A549 (cell line): ENCODE measurements at regions of chr11 and their contacts with region 1.

Region 1: GRCh38 chr11:65366340-65366773 is 11.8 kb downstream of the TIGD3 start:
- DNase-seq: peak; percentile 88 to 90
- ATAC-seq: peak; percentile 84 to 85
- H3K4me3 ChIP-seq: no peak overlapping the region
- H3K27ac ChIP-seq: peak overlapping the region; percentile 45 to 72; a peak in 5 of 6 replicates
- H3K4me1 ChIP-seq: peaks cover 18% of the 10 kb centered on the region
- CTCF ChIP-seq: peak; percentile 85
- EP300 ChIP-seq: no peak
- POLR2A ChIP-seq: no peak
- RAD21 ChIP-seq: peak; percentile 91 to 96

Region 2: GRCh38 chr11:65512306-65512705 is 145.9 kb after region 1 on chr11:
- CTCF ChIA-PET with region 1: interaction called, 35 read pairs
- POLR2A ChIA-PET with region 1: interaction called, 8 read pairs
- DNase-seq: no peak
- ATAC-seq: no peak
- H3K4me3 ChIP-seq: no peak overlapping the region
- H3K27ac ChIP-seq: no peak overlapping the region
- H3K4me1 ChIP-seq: peaks cover 15% of the 10 kb centered on the region
- CTCF ChIP-seq: no peak
- EP300 ChIP-seq: no peak
- POLR2A ChIP-seq: no peak
- RAD21 ChIP-seq: no peak